HEK293T (cell line): ENCODE measurements at regions of chr7 and their contacts with region 1.

Region 1: GRCh38 chr7:20798081-20798693 is 11.5 kb upstream of the SP8 start:
- DNase-seq: peak; percentile 74

Region 2: DNA sequence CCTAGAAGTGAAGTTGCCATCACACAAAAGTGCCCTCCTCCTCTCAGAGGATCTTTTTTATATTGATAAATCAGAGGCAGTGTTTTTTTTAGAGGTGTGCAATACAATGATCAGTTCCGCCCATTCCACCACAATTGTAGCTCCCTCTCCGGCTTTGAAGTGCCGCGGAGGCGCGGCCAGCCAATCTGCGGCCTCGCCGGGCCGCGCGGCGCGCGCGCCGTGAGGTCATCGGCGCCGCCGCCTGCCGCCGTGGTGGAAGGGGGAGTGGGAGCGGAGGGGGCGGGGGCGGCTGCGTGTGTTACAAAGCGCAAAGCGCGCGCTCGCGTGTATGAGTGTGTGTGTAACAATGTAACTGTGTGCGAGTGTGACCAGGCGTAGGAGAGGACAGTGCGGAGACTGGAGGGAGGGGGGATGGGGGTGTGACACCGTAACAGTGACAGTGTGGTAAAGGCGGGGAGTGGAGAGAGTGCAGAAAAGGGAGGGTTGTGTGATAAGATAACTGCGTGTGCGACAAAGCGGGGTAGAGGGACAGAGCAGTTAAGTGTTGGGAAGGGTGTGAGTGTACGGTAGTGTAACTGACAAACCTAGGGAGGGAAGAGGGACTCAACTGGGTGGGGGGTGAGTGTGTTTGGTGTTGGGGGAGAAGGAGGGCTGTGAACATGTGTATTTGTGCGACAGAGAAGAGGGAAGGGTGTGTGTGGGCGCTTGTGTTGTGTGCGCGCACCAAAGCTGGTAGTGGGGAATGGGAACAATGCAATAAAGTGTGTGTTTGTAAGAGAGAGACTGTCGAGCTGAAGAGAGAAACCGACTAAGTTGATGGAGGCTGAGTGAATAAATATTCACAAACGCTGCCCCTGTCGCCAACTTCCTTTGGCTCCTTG is 11.2 kb before region 1 on chr7 and contains the start of gene SP8:
- CTCF ChIA-PET with region 1: no interaction called
- POLR2A ChIA-PET with region 1: interaction called, 16 read pairs
- DNase-seq: peak; percentile 77

Region 3: DNA sequence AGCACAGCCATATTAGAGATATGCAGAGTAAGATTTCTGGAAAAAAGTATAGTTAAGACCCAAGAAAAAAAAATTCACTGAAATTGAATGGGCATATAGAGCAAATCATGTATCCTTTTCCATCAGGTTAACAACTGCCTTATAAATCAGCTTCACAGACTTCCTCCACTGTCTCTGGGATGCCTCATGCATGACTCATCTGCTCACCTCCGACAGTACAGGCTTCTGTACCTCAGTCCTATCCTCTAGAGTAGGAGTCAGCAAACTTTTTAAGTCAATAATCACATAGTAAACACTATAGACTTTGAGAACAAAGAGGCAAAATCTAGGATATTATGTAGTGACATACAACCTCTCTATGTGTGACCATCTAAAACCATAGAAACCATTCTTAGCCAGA is 200.1 kb after region 1 on chr7:
- CTCF ChIA-PET with region 1: no interaction called
- POLR2A ChIA-PET with region 1: no interaction called
- DNase-seq: no peak